ENCODE measurements at regions of chr6 and their contacts with region 1.

Region 1: DNA sequence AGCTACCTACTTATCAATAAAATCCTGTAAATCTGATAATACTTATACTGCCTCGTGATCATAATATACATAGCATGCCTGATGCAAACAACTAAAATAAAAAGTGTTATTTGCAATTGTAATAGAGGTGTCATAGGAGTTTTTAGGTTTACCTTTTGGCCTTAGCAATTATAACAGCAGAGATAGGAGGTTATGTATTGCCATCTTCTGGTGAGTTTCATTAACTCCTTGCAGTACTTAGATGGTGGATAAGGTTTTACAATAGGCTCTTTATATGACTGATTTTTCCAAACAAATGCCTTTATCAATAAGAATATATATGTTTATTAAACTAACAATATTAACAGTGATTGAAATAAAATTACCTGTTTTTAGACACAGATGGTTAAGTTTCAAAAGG is 27.8 kb upstream of the MYCT1 start:
- DNase-seq: peak; percentile 21
- H3K4me3 ChIP-seq: no peak overlapping the region
- H3K27ac ChIP-seq: no peak overlapping the region
- H3K4me1 ChIP-seq: no peaks in the 10 kb centered on the region
- H3K27me3 ChIP-seq: no peaks in the 10 kb centered on the region
- CTCF ChIP-seq: peak; percentile 30 to 41

Region 2: DNA sequence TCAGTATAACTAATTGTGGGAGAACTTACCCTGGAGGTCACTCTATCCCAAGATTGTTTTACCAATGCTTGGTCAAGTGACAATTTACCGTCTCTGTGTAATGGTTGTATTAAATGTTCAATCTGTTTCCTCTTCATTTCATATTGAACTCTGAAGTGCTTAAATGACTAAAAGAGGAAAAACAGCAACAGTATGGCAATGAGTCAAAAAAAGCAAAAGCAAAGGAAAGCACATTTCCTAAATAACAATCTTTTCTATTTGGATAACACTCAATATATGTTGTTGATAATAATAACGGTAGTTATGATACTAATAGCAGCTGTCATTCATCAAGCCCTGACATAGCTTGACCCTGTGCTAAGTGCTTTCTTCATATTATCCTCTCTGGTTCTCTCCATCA is 185.1 kb before region 1 on chr6:
- CTCF ChIA-PET with region 1: no interaction called
- dilution Hi-C with region 1: no loop called
- in situ Hi-C with region 1: no loop called
- intact Hi-C with region 1: loop called (anchors 1 kb)
- DNase-seq: no peak
- H3K4me3 ChIP-seq: no peak overlapping the region
- H3K27ac ChIP-seq: no peak overlapping the region
- H3K4me1 ChIP-seq: no peaks in the 10 kb centered on the region
- H3K27me3 ChIP-seq: no peaks in the 10 kb centered on the region
- CTCF ChIP-seq: no peak

Region 3: DNA sequence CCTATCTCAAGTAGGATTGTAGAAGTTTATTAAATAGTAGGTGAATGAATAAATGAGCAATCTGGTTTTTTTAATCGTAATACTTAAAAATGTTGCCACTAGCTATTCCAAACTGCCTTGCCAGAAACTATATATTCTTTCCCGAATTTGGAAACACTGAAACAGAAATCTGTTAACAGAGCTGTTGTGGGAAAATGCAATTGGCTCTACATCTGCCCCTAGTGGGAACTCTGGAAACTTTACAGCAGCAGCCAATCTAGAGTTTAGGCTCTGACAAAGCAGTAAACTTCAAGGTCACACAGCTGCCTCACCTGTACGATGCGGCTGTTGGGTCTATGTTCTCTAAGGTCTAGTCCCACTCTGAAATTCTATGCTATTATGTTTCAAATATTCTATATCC is 74.4 kb before region 1 on chr6:
- CTCF ChIA-PET with region 1: no interaction called
- dilution Hi-C with region 1: loop called (anchors 5 kb)
- in situ Hi-C with region 1: no loop called
- intact Hi-C with region 1: no loop called
- DNase-seq: no peak
- H3K4me3 ChIP-seq: no peak overlapping the region
- H3K27ac ChIP-seq: no peak overlapping the region
- H3K4me1 ChIP-seq: no peaks in the 10 kb centered on the region
- H3K27me3 ChIP-seq: no peaks in the 10 kb centered on the region
- CTCF ChIP-seq: peak; percentile 49 to 58

Measured in mammary epithelial cell (primary cell).